ENCODE measurements at regions of chr5 and their contacts with region 1.

Region 1: DNA sequence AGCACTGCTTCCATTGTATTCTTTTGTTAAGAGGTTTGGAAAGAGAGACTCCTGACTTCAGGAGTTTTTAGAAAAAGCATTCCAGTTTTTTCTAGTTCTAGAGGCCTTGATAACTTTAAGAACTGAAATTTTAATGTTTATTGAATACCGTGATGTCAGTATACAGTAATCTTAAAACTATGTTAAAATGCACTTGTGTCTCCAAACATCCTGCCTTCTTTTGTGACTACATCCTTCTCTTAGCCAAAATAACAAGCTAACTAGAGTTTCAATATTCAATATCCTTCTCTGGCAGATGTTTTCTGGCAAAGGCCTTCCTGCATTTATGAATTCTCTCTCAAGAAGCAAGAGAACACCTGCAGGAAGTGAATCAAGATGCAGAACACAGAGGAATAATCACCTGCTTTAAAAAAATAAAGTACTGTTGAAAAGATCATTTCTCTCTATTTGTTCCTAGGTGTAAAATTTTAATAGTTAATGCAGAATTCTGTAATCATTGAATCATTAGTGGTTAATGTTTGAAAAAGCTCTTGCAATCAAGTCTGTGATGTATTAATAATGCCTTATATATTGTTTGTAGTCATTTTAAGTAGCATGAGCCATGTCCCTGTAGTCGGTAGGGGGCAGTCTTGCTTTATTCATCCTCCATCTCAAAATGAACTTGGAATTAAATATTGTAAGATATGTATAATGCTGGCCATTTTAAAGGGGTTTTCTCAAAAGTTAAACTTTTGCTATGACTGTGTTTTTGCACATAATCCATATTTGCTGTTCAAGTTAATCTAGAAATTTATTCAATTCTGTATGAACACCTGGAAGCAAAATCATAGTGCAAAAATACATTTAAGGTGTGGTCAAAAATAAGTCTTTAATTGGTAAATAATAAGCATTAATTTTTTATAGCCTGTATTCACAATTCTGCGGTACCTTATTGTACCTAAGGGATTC is 43.1 kb downstream of the NDFIP1 start:
- DNase-seq: peak in 6 of 9 donors; percentile 49 to 69 (median 62)
- ATAC-seq: peak; percentile 87
- H3K4me3 ChIP-seq: no peak overlapping the region
- H3K4me3 Mint-ChIP-seq: no peak overlapping the region
- H3K27ac ChIP-seq: no peak overlapping the region
- H3K27ac Mint-ChIP-seq: peak overlapping the region in 2 of 9 donors; percentile 16 to 56
- H3K4me1 ChIP-seq: no peaks in the 10 kb centered on the region
- H3K4me1 Mint-ChIP-seq: peaks cover 0 to 26% (median 9%) of the 10 kb centered on the region in 7 donors
- H3K27me3 ChIP-seq: no peaks in the 10 kb centered on the region
- H3K27me3 Mint-ChIP-seq: no peaks in the 10 kb centered on the region

Region 2: DNA sequence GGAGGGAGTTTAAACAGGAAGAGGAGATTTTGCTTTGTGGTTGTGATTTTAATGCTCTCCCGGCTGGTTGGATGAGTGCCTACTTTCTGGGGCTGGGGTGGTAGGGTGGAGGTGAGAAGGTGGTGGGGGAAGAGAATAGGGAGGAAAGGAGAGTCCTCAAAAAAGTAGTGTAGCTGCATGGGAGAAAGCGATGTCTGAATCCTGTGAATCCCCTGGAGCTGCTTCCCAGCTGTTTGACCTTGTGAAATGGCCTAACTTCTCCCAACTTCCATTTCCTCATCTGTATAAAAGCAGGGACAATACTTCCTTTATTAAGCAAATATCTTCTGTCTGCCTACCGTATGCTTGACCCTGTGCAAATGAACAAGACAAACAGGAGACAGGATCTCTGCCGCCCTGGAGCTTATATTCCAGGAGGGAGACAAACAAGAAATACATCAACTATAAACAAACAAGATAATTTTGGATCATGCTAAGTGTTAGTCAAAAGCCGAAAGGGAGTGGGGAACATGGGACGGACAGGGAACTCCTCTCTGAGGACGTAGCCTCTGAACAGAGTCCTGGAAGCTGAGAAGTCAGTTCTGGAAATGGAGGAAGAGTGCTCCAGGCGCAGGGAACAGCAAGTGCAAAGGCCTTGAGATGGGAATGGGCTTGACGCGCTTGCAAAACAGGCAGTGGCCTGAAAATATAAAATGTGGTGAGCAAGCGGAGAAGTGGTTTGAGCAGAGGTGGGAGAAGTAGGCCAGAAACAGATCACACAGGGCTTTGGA is 69.6 kb after region 1 on chr5:
- CTCF ChIA-PET with region 1: no interaction called
- POLR2A ChIA-PET with region 1: no interaction called
- intact Hi-C with region 1: loop called (anchors 2 to 5 kb)
- DNase-seq: no peak
- ATAC-seq: no peak
- H3K4me3 ChIP-seq: no peak overlapping the region
- H3K4me3 Mint-ChIP-seq: peak overlapping the region in 3 of 10 donors; percentile 17 to 31 (median 19)
- H3K27ac ChIP-seq: no peak overlapping the region
- H3K27ac Mint-ChIP-seq: peak overlapping the region in 3 of 9 donors; percentile 3 to 52 (median 6)
- H3K4me1 ChIP-seq: peaks cover 6 to 25% of the 10 kb centered on the region in 2 donors
- H3K4me1 Mint-ChIP-seq: peaks cover 18 to 39% (median 34%) of the 10 kb centered on the region in 7 donors
- H3K27me3 ChIP-seq: no peaks in the 10 kb centered on the region
- H3K27me3 Mint-ChIP-seq: peaks cover 0 to 10% (median 0%) of the 10 kb centered on the region in 5 donors

Region 3: DNA sequence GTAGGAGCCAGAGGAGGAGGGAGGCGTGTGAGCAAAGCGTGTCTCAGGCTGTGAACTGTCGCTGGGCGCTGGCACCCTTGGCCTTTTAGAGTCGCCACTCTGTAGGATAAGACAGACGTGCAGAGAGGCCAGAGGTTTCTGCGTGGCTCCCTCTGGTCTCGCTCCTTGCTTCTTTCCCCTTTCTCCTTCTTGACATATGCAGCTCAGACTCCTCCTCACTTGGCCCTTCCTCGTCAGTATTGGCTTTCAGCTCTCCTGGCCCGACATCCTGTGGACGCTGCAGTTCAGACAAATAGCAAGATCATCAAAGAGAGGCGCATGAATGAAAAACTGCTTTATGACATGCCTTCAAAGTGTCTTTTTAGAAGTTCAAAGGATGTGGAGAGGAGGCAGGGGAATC is 289.9 kb after region 1 on chr5:
- CTCF ChIA-PET with region 1: no interaction called
- POLR2A ChIA-PET with region 1: no interaction called
- intact Hi-C with region 1: loop called in 1 of 2 experiments (anchors 1 kb)
- DNase-seq: peak in 7 of 9 donors; percentile 11 to 48 (median 31)
- ATAC-seq: peak; percentile 42
- H3K4me3 ChIP-seq: no peak overlapping the region
- H3K4me3 Mint-ChIP-seq: peak overlapping the region; percentile 0 to 58 (median 43)
- H3K27ac ChIP-seq: no peak overlapping the region
- H3K27ac Mint-ChIP-seq: peak overlapping the region in 1 of 9 donors; percentile 1
- H3K4me1 ChIP-seq: peaks cover 0 to 12% of the 10 kb centered on the region in 2 donors
- H3K4me1 Mint-ChIP-seq: peaks cover 14 to 34% (median 23%) of the 10 kb centered on the region in 7 donors
- H3K27me3 ChIP-seq: no peaks in the 10 kb centered on the region
- H3K27me3 Mint-ChIP-seq: peaks cover 0 to 13% (median 0%) of the 10 kb centered on the region in 5 donors

Region 4: DNA sequence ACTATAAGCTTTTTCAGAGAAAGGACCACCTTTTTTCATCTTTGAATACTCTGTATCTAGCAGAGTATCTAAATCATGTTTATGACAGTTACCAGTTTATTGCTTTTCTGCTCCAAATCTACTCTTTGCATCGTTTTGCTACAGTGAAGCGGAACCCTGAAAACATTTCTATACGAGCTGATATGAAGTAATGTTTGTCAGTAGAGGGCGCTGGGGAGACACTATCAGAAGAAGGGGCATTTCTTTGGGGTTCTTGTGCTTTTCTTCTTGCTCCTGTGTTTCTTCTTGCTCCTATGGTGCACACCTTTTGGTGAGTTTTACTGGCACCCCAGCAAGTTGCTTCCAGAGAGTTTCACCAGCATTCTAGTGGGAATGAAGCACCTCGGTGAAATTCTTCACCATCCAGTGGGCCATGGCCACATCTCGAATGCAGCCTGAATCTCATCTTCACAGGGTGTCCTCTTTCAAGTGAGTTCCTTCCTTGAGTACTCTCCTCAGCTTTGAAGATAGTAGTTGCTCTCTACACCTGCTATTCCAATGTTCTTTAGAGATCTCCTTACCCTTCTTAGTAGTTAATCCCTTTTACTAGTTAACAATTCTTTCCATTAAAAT is 435.8 kb after region 1 on chr5:
- CTCF ChIA-PET with region 1: no interaction called
- POLR2A ChIA-PET with region 1: no interaction called
- intact Hi-C with region 1: loop called in 1 of 2 experiments (anchors 1 kb)
- DNase-seq: peak in 2 of 9 donors; percentile 8 to 12
- ATAC-seq: no peak
- H3K4me3 ChIP-seq: no peak overlapping the region
- H3K4me3 Mint-ChIP-seq: no peak overlapping the region
- H3K27ac ChIP-seq: no peak overlapping the region
- H3K27ac Mint-ChIP-seq: no peak overlapping the region
- H3K4me1 ChIP-seq: no peaks in the 10 kb centered on the region
- H3K4me1 Mint-ChIP-seq: peaks cover 3 to 14% (median 11%) of the 10 kb centered on the region in 7 donors
- H3K27me3 ChIP-seq: peaks cover 0 to 3% of the 10 kb centered on the region in 2 donors
- H3K27me3 Mint-ChIP-seq: peaks cover 0 to 52% (median 13%) of the 10 kb centered on the region in 5 donors

Region 5: GRCh38 chr5:142655339-142656267 is 503.9 kb after region 1 on chr5:
- CTCF ChIA-PET with region 1: interaction called, 3 read pairs
- POLR2A ChIA-PET with region 1: no interaction called
- intact Hi-C with region 1: loop called (anchors 1 to 2 kb)
- DNase-seq: peak; percentile 26 to 76 (median 61)
- ATAC-seq: peak; percentile 90
- H3K4me3 ChIP-seq: no peak overlapping the region
- H3K4me3 Mint-ChIP-seq: no peak overlapping the region
- H3K27ac ChIP-seq: no peak overlapping the region
- H3K27ac Mint-ChIP-seq: no peak overlapping the region
- H3K4me1 ChIP-seq: no peaks in the 10 kb centered on the region
- H3K4me1 Mint-ChIP-seq: peaks cover 0 to 9% (median 7%) of the 10 kb centered on the region in 7 donors
- H3K27me3 ChIP-seq: no peaks in the 10 kb centered on the region
- H3K27me3 Mint-ChIP-seq: peaks cover 8 to 29% (median 11%) of the 10 kb centered on the region in 5 donors

Region 6: DNA sequence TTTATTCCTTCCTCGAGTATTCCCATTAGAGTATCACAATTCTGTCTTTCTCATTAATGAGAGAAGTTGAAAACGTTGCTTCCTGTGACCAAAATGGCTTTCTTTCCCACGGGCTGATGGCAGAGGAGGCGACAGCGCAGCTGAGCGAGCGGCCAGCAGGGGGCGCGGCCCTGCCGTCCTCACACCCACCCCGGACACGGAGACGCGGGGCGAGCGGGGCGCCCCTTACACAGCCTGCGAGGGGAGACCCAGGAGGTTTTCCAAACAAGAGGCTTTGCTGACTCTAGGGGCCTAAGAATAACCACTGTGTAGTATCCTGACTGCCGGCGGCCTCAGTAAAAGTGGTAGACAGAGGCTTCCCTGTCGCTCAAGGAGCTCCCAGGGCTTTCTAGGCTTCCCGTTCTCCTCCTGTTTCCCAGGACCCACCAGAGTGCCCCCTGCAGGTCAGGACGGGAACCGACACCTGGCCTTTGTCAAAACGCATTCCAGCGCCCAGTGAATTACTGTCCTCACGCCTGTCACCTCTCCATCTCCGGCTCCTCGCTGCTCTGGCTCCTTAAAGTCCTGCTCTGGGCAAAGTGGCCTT is 561.5 kb after region 1 on chr5:
- CTCF ChIA-PET with region 1: interaction called, 3 read pairs
- POLR2A ChIA-PET with region 1: no interaction called
- intact Hi-C with region 1: loop called in 1 of 2 experiments (anchors 5 kb)
- DNase-seq: peak; percentile 72 to 92 (median 86)
- ATAC-seq: peak; percentile 96
- H3K4me3 ChIP-seq: peak overlapping the region; percentile 61
- H3K4me3 Mint-ChIP-seq: peak overlapping the region; percentile 45 to 82 (median 70)
- H3K27ac ChIP-seq: no peak overlapping the region
- H3K27ac Mint-ChIP-seq: peak overlapping the region in 2 of 9 donors; percentile 39 to 73
- H3K4me1 ChIP-seq: peaks cover 0 to 7% of the 10 kb centered on the region in 2 donors
- H3K4me1 Mint-ChIP-seq: peaks cover 0 to 16% (median 10%) of the 10 kb centered on the region in 7 donors
- H3K27me3 ChIP-seq: no peaks in the 10 kb centered on the region
- H3K27me3 Mint-ChIP-seq: peaks cover 0 to 33% (median 4%) of the 10 kb centered on the region in 5 donors